Pancreas (tissue), 10 donors: ENCODE measurements at regions of chr1 and their contacts with region 1.

Region 1: GRCh38 chr1:109099938-109100773 is 9.6 kb downstream of the TMEM167B start:
- DNase-seq: peak; percentile 95 to 98 (median 96)
- ATAC-seq: peak; percentile 97 to 99 (median 98)
- H3K4me3 ChIP-seq: peak overlapping the region; percentile 84 to 99 (median 92)
- H3K27ac ChIP-seq: peak overlapping the region; percentile 88 to 94 (median 89)
- H3K4me1 ChIP-seq: peaks cover 0 to 10% (median 0%) of the 10 kb centered on the region in 3 donors
- H3K27me3 ChIP-seq: no peaks in the 10 kb centered on the region
- CTCF ChIP-seq: peak; percentile 72 to 90 (median 80)

Region 2: DNA sequence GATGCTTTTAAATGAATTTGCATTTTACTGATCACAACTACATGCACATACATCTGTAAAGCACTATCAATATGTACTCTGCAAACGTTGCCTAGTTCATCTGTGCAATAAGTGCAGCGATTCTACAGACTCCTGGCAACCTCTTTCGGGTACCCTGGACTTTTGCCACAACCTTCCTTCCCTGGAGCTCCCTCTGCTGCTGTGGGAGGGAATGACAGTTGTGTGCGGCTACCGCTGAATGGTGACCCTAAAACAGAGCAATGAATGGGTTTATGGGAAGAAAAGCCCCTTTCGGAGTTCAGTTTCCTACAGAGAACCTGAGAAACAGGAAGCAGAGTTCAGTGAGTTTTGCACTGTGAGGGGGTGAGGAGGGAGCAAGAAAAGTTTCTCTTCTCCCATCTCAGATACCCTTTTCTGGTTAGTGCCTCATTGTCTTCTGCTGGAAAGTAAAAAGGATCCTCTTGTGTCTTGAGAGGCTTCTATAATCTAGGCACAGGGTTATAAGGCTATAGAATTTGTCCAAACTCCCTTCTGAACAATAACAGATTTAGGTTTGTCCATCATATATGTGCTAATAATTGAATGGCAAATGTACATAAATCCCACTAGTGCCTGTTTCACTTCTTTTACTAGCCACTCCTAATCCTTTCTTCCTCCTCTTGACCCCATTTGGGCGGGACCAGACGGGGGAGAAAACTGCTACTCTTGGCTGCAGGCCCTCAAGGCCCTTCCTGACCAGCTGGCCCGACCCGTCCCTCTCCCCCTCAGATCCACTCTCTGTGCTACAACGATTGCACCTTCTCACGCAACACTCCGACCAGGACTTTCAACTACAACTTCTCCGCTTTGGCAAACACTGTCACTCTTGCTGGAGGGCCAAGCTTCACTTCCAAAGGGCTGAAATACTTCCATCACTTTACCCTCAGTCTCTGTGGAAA is 93.8 kb after region 1 on chr1:
- intact Hi-C with region 1: loop called in 2 of 3 experiments (anchors 5 to 10 kb)
- DNase-seq: peak in 4 of 6 donors; percentile 41 to 75 (median 54)
- ATAC-seq: peak; percentile 51 to 83 (median 74)
- H3K4me3 ChIP-seq: no peak overlapping the region
- H3K27ac ChIP-seq: no peak overlapping the region
- H3K4me1 ChIP-seq: peaks cover 0 to 15% (median 7%) of the 10 kb centered on the region in 3 donors
- H3K27me3 ChIP-seq: no peaks in the 10 kb centered on the region
- CTCF ChIP-seq: peak; percentile 25 to 64 (median 52)